ENCODE measurements at regions of chr21 and their contacts with region 1.

Region 1: DNA sequence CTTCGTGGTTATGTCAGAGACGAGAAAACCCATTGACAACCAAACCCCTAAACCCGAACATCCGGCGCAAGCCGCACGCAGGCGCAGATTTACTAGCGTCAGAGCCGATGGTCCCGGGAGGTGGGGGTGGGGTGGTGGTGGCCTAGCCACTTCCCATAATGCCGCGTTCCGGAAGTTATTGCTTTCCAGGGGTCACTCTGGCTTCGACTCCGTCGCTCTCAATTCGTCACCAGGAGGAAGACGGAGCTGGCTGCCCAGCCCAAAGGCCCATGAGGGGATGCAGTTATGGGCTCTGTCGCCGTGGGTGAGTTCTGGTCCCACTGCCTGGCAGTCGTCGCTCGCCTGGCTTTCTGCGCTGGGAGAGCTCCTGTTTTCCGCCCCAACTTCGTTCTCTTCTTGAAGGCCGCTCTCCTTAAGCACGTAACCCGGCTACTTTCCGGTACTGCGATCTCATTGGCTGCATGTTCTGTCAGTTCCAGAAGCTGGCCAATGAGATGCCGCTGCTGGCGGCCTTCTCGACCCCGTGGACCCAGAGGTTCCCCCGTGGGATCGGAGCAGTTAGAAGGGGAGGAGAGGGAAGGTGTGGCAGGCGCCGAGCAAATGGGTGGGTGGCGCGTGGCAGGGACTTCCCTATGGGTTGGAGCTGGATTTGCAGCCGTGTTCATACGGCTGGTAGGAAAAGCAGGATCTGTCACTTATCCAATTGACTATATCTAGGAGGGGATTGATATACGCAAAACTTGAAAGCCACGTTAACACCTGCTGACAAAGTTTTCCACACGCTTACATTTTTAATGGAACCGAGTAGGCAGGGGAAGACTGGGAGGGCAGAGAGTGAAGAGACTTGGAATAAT is at the start of gene USP16:
- DNase-seq: peak; percentile 95
- H3K4me3 ChIP-seq: peak within 1 kb of the TSS; percentile 36 to 79 (median 46)
- H3K27ac ChIP-seq: peak within 1 kb of the TSS; percentile 97 to 98 (median 97)
- H3K4me1 ChIP-seq: peaks cover 11 to 22% of the 10 kb centered on the region in 2 donors
- H3K27me3 ChIP-seq: no peaks in the 10 kb centered on the region
- CTCF ChIP-seq: peak in 3 of 6 experiments; percentile 29 to 41 (median 34)
- POLR2A ChIP-seq: peak; percentile 43 to 60
- total RNA-seq, gene USP16: 40.0 to 53.4 (median 45.7) TPM

Region 2: DNA sequence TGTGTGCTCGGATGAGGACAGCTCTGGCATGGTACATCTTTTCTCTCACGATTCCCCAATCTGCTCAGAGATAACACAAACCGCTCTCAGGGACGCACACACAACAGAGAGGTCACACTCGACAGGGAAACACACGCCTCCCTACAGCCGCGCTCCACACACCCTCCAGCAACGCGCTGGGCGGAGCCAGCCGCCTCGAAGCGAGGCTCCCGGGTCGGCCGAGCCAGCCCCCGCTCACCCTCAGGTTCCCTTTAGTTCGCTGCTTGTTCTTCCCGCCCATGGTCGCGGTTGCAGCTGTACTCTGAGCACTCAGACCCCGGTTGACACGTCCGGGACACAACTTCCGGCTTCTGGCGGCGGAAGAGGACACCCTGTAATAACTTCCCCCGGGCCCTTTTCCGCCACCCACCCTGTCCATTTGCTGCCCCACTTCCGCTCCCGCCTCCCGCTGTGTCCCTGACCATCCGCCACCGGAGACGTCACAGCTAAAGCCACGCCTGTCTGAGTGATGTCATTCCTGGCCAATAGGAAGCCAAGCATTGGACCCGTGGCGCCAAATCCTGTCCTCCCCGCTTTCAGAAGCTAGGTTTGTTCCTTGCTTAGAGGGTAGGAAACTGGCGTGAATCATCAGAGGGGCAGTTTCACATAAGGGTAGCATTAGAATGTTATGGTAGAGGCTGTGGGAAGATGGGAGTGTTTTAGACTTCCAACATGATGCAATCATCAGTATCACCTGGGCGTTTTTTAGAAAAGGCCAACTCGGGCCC is 32.0 kb before region 1 on chr21 and contains the start of gene LTN1:
- intact Hi-C with region 1: loop called (anchors 5 kb)
- DNase-seq: peak; percentile 99
- H3K4me3 ChIP-seq: peak within 1 kb of the TSS; percentile 45 to 79 (median 77)
- H3K27ac ChIP-seq: peak within 1 kb of the TSS; percentile 46 to 81 (median 79)
- H3K4me1 ChIP-seq: peaks cover 9 to 14% of the 10 kb centered on the region in 2 donors
- H3K27me3 ChIP-seq: no peaks in the 10 kb centered on the region
- CTCF ChIP-seq: no peak
- POLR2A ChIP-seq: peak in 1 of 2 donors; percentile 68
- total RNA-seq, gene LTN1: 25.5 to 45.3 (median 28.8) TPM

Region 3: DNA sequence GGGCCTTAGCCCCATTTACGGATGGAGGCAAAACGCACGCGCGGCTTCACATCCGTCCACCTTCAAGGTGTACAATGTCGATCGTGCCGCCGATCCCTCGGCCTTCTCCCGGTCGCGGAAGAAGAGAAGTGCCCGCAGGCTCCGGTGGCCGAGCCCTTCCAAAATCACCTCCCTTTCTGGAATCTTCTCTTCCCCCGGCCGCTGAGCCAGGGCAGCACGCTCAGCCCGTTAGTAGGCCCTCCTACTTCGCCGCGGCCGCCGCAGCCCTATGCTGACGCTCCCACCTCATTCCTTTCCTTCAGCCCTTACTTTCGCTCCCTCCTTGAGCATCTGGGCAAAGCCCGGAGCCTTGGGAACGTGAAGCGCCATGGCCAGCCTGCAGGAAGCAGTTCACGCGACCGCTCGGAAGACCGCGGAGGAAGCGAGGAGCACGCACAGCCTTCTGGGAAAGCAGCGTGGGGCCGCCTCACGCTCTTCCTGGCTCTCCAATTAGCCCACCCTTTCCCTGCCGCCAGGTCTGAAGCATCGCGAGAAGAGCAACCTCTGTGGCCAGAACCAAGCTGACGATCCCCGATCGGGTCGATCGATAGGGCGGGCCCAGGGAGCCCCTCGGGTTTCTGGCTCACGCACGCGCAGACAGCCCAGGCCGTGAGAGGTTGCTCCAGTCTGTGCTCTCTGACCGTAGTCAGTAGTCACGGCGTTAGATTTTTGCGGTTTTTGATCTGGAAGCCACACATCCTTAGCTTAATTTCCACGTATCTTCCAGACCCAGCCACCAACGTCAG is 48.7 kb after region 1 on chr21 and contains the start of gene CCT8:
- intact Hi-C with region 1: loop called (anchors 5 kb)
- DNase-seq: peak; percentile 99
- H3K4me3 ChIP-seq: peak within 1 kb of the TSS; percentile 72 to 96 (median 95)
- H3K27ac ChIP-seq: peak within 1 kb of the TSS; percentile 71 to 92 (median 87)
- H3K4me1 ChIP-seq: peaks cover 17% of the 10 kb centered on the region in 2 donors
- H3K27me3 ChIP-seq: no peaks in the 10 kb centered on the region
- CTCF ChIP-seq: peak in 1 of 6 experiments; percentile 8
- POLR2A ChIP-seq: peak; percentile 5 to 89
- total RNA-seq, gene CCT8: 75.4 to 99.3 (median 86.7) TPM